Right ventricle myocardium superior (tissue), 1 donor: ENCODE measurements at regions of chr1 and their contacts with region 1.

Region 1: DNA sequence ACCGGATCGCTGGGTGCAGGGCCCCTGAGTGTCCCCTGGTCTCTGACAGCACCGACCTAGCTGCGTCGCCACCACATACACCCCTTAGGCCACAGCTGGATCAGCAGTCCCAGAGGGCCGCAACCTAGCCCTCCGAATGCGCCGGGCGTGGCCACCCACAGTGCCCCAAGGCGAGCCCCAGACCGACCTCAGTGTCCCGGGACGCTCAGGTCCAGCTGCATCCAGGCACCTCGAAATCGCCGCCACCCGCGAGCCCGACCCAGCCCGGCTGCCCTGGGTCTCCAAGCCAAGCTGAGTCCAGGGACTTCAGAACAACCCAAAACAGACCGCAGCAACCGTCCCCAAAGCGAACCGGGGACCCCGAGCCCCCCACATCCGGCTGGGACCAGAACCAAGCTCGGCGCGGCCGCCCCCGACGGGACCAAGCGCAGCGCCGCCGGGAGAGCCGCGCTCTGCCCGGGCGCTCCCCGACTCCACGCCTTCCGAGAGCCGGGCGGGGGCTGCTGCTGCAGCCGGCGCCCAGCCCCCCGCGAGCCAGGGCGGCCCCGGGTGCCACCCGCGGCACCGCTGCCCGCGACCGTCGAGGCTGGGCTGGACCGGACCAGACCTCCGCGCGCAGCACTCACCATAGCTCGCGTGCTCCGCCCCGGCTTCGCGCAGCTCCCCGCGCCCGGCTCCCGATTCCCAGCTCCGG is 54.6 kb upstream of the ECE1 start:
- DNase-seq: peak; percentile 50
- ATAC-seq: peak; percentile 39

Region 2: DNA sequence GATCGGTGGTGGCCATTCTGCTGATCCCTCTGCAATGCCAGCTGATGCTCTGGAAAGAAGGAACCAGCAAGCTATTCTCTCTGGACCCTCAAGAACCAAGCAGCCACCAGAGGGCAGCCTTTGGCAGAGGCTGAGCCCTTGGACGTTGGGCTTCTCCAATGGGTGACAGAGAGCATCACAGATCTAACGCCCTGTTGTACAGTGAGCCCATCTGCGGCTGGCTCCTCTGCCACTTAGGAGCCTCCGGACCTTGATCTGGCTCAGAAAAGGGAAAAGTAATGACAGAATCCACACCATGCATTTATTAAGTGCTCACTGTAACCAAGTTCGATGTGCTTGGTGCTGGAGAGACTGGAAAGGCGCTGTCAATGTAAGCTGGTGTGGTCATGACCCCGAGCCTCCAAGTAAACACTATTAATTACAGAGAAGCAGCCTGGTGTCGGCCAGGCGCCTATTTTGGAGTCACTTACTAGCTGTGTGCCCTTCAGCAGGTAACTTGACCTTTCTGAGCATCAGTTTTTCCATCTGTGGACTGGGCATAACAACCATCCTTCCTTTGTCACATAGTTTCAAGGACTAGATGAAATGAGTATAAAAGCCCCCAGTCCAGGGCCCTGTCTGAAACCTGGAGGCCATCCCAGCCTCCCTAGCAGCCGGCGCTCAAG is 89.5 kb before region 1 on chr1:
- intact Hi-C with region 1: loop called (anchors 5 kb)
- DNase-seq: peak; percentile 94
- ATAC-seq: peak; percentile 89